Caco-2 (cell line): ENCODE measurements at regions of chr17 and their contacts with region 1.

Region 1: DNA sequence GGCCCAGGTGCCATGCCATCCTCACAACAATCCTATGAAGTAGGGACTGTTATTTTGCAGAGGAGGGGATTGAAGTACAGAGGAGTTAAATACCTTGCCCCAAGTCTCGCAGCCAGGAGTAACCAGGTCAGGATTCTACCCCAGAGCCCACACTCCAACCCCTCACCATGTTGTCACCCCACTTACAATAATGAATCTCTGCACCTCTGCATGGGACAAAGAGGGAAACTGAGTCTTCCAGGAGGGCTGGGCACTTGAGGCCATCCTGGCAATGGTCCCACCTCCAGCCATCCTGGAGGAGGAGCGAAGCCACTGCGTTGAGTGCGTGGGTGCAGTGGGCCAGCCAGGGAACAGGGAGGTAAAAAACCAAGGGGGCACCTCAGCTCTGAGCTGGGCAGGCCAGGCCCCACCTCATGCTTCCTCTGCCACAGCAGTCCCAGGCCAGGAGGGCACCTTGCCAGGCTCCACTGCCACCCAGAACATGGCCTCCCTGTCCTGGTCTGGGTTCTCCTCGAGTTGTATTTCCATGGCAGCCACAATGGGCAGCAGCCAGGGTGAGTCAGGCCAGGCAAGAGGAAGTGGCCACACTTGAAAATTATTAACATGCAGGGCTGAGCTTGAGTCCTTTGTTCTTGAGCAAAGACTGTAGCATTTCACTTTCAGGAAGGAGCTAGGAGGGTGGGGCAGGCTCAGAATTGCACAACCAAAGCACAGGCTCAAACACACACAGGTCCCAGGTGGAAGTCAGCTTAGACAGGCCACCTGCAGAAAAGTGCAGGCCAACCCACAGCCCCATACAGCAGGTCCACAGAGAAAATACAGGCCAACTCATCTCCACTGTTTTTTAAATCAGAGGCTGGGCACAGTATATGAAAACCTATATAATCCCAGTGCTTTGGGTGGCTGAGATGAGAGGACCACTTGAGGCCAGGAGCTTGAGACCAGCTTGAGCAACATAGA is 52.1 kb downstream of the CUEDC1 start:
- DNase-seq: peak; percentile 89 to 92
- H3K4me3 ChIP-seq: no peak overlapping the region
- H3K4me3 Mint-ChIP-seq: peak overlapping the region; percentile 49
- H3K27ac Mint-ChIP-seq: peak overlapping the region; percentile 87
- H3K4me1 ChIP-seq: peaks cover 74% of the 10 kb centered on the region
- H3K4me1 Mint-ChIP-seq: peaks cover 52% of the 10 kb centered on the region
- H3K27me3 ChIP-seq: no peaks in the 10 kb centered on the region
- H3K27me3 Mint-ChIP-seq: no peaks in the 10 kb centered on the region
- CTCF ChIP-seq: no peak

Region 2: DNA sequence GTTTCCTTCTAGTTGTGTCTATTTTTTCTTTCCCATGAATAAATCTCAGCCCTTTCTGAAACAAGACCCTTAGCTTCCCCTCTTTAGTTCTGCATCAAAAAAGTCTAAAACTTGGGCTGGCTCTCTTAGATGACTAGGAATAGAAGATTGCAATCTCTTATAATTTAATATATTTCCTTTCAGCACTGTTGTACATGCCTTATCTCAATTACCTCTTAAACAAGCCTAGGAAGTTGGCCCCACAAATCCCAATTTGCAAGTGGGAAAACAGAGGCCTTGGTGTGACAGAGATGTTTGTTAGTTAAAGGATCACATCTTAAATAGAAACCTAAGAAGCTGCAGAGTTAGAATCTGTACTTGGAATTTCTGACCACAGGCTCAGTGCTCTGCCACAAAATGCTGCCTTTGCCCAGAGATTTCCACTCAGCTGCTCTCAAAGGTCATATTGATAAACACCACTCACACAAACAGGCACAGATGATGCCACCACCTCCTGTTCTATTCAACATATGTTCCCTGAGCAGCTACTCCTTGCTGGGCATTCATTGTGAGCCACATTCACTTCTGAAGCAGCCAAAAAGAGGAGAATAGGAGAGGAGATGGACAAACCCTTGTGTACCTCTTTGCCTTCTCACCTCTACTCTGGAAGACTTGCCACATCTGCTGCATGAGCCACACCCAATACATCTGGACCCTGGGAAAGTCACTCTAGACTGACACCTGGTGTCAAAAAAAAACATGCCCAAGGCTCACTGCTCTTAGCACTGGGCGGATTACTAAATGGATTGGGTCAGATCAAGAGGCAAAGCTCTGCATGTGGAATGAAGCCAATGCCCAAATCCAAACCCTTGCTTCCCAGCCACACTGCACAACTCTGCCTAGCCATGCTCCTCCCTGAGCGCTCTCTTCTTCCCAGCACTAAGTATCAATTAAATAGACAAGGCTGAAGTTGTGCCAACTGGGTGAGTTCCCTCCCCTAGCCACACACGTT is 163.4 kb before region 1 on chr17:
- CTCF ChIA-PET with region 1: no interaction called
- POLR2A ChIA-PET with region 1: no interaction called
- intact Hi-C with region 1: no loop called
- DNase-seq: peak in 1 of 2 experiments; percentile 62
- H3K4me3 ChIP-seq: no peak overlapping the region
- H3K4me3 Mint-ChIP-seq: no peak overlapping the region
- H3K27ac Mint-ChIP-seq: no peak overlapping the region
- H3K4me1 ChIP-seq: no peaks in the 10 kb centered on the region
- H3K4me1 Mint-ChIP-seq: no peaks in the 10 kb centered on the region
- H3K27me3 ChIP-seq: no peaks in the 10 kb centered on the region
- H3K27me3 Mint-ChIP-seq: peaks cover 17% of the 10 kb centered on the region
- CTCF ChIP-seq: peak; percentile 65 to 69

Region 3: GRCh38 chr17:57918017-57918751 is 15.1 kb after region 1 on chr17:
- CTCF ChIA-PET with region 1: no interaction called
- POLR2A ChIA-PET with region 1: interaction called, 3 read pairs
- intact Hi-C with region 1: loop called (anchors 1 kb)
- DNase-seq: peak; percentile 61 to 67
- H3K4me3 ChIP-seq: no peak overlapping the region
- H3K4me3 Mint-ChIP-seq: no peak overlapping the region
- H3K27ac Mint-ChIP-seq: peak overlapping the region; percentile 64
- H3K4me1 ChIP-seq: peaks cover 28% of the 10 kb centered on the region
- H3K4me1 Mint-ChIP-seq: peaks cover 21% of the 10 kb centered on the region
- H3K27me3 ChIP-seq: no peaks in the 10 kb centered on the region
- H3K27me3 Mint-ChIP-seq: no peaks in the 10 kb centered on the region
- CTCF ChIP-seq: no peak

Region 4: GRCh38 chr17:57939797-57940196 is 36.7 kb after region 1 on chr17:
- CTCF ChIA-PET with region 1: interaction called, 3 read pairs
- POLR2A ChIA-PET with region 1: no interaction called
- intact Hi-C with region 1: loop called (anchors 1 kb)
- DNase-seq: no peak
- H3K4me3 ChIP-seq: no peak overlapping the region
- H3K4me3 Mint-ChIP-seq: no peak overlapping the region
- H3K27ac Mint-ChIP-seq: no peak overlapping the region
- H3K4me1 ChIP-seq: peaks cover 26% of the 10 kb centered on the region
- H3K4me1 Mint-ChIP-seq: peaks cover 49% of the 10 kb centered on the region
- H3K27me3 ChIP-seq: no peaks in the 10 kb centered on the region
- H3K27me3 Mint-ChIP-seq: no peaks in the 10 kb centered on the region
- CTCF ChIP-seq: no peak